ENCODE measurements at regions of chr3 and their contacts with region 1.

Region 1: GRCh38 chr3:120558771-120559241 is 37.3 kb upstream of the NDUFB4 start:
- DNase-seq: peak; percentile 78
- H3K4me3 ChIP-seq: peak overlapping the region; percentile 59 to 61
- H3K27ac ChIP-seq: peak overlapping the region; percentile 81 to 94
- H3K4me1 ChIP-seq: peaks cover 20 to 21% of the 10 kb centered on the region in 2 experiments
- H3K27me3 ChIP-seq: no peaks in the 10 kb centered on the region
- CTCF ChIP-seq: peak; percentile 97
- EP300 ChIP-seq: no peak
- RAD21 ChIP-seq: peak; percentile 91

Region 2: DNA sequence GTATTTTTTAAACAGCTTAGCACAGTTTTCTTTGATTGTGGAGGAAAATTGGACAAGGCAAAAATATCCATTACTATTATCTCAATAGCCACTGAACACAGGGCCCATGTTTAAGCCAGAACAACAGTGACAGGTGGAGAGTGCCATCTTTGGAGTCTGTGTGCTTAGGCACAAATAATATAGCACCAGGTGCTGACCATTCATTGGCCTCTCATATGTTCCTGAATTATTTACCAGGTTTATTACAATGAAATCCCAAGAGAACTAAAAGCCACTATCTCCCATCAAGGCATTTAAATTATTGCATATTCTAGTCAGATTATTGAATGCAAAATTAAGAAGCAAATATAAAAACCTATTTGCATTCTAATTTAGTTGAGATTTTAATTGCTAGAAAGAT is 313.4 kb before region 1 on chr3:
- CTCF ChIA-PET with region 1: interaction called, 77 read pairs
- POLR2A ChIA-PET with region 1: interaction called, 4 read pairs
- DNase-seq: no peak
- H3K4me3 ChIP-seq: no peak overlapping the region
- H3K27ac ChIP-seq: no peak overlapping the region
- H3K4me1 ChIP-seq: peaks cover 0 to 3% of the 10 kb centered on the region in 2 experiments; a peak in 1 of 4 replicates
- H3K27me3 ChIP-seq: no peaks in the 10 kb centered on the region
- CTCF ChIP-seq: no peak
- EP300 ChIP-seq: no peak
- RAD21 ChIP-seq: no peak

Region 3: GRCh38 chr3:120432150-120432860 is 126.5 kb before region 1 on chr3:
- CTCF ChIA-PET with region 1: interaction called, 269 read pairs
- POLR2A ChIA-PET with region 1: no interaction called
- DNase-seq: no peak
- H3K4me3 ChIP-seq: no peak overlapping the region
- H3K27ac ChIP-seq: peak overlapping the region; percentile 54 to 96; a peak in 3 of 4 replicates
- H3K4me1 ChIP-seq: peaks cover 4 to 83% of the 10 kb centered on the region in 2 experiments
- H3K27me3 ChIP-seq: no peaks in the 10 kb centered on the region
- CTCF ChIP-seq: no peak
- EP300 ChIP-seq: no peak
- RAD21 ChIP-seq: no peak

Region 4: DNA sequence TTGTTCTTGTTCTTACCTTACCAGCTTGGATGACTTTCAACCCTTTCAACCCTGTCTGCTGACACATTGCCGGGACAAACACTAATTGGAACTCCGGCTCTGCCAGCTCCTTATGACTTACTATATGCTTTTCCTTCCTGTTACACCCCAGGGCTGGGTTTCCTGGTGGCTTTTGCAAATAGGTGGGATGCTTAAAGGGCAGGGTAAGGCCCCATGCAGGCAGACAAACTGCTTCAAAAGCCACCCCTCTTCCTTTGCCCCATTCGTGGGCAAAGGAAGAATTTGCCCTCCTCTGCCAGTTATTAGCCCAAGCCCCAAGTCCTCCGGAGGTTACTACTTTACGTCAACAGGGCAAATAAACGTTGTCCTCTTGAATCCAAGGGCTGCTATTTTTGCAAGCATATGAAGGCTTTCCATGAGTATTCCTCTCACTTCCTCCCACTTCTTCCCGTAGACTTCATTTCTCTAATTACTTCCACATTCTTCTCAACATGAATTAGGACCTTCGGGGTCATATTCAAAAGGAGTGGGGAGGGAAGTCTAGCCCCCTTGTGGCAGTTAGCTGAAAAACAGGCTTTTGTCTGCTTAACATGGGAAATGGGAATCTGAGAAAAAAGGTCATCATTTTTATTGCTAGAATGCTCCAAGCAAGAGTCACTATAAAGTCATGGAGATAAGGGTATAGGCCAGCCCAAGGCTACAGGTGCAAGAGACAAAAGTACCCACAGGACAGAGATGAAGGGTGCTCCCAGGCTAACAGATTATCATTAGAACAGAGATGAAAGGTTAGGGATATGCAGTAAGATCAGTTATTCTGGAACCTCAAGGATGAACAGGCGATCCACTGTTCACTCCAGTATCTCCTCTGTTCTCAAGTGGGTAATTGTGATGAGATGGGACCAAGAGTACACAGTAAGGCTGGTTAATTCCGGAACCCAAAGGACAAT is 51.7 kb before region 1 on chr3:
- CTCF ChIA-PET with region 1: interaction called, 10 read pairs
- POLR2A ChIA-PET with region 1: no interaction called
- DNase-seq: peak; percentile 34
- H3K4me3 ChIP-seq: no peak overlapping the region
- H3K27ac ChIP-seq: no peak overlapping the region
- H3K4me1 ChIP-seq: peaks cover 0 to 10% of the 10 kb centered on the region in 2 experiments; a peak in 2 of 4 replicates
- H3K27me3 ChIP-seq: no peaks in the 10 kb centered on the region
- CTCF ChIP-seq: peak; percentile 76
- EP300 ChIP-seq: no peak
- RAD21 ChIP-seq: peak; percentile 61

Region 5: GRCh38 chr3:120536642-120537041 is 22.2 kb before region 1 on chr3:
- CTCF ChIA-PET with region 1: interaction called, 13 read pairs
- POLR2A ChIA-PET with region 1: no interaction called
- DNase-seq: no peak
- H3K4me3 ChIP-seq: no peak overlapping the region
- H3K27ac ChIP-seq: no peak overlapping the region
- H3K4me1 ChIP-seq: no peaks in the 10 kb centered on the region
- H3K27me3 ChIP-seq: no peaks in the 10 kb centered on the region
- CTCF ChIP-seq: no peak
- EP300 ChIP-seq: no peak
- RAD21 ChIP-seq: no peak

Region 6: GRCh38 chr3:120801484-120801883 is 242.7 kb after region 1 on chr3:
- CTCF ChIA-PET with region 1: interaction called, 16 read pairs
- POLR2A ChIA-PET with region 1: no interaction called
- DNase-seq: no peak
- H3K4me3 ChIP-seq: no peak overlapping the region
- H3K27ac ChIP-seq: no peak overlapping the region
- H3K4me1 ChIP-seq: no peaks in the 10 kb centered on the region
- H3K27me3 ChIP-seq: no peaks in the 10 kb centered on the region
- CTCF ChIP-seq: no peak
- EP300 ChIP-seq: no peak
- RAD21 ChIP-seq: no peak

Region 7: DNA sequence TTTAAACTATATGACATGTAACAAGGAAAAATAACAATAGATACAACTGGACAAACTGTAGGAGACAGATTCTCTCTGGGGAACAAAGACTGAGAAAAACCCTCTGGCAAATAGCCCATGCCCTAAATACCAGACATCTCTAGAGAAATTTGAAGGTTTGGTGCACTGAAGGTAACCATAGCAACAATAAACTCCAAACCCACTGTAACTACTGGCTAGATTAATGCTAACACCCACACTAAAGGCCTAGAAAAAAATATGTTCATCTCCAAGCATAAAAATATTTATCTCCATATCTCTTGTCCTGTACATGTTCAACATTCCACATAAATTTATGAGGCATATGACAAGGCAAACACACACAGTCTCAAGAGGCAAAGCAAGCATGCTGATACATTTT is 616.3 kb after region 1 on chr3:
- CTCF ChIA-PET with region 1: no interaction called
- POLR2A ChIA-PET with region 1: no interaction called
- DNase-seq: no peak
- H3K4me3 ChIP-seq: no peak overlapping the region
- H3K27ac ChIP-seq: no peak overlapping the region
- H3K4me1 ChIP-seq: no peaks in the 10 kb centered on the region
- H3K27me3 ChIP-seq: no peaks in the 10 kb centered on the region
- CTCF ChIP-seq: no peak
- EP300 ChIP-seq: no peak
- RAD21 ChIP-seq: no peak